Aorta (tissue), 5 donors: ENCODE measurements at regions of chr14 and their contacts with region 1.

Region 1: GRCh38 chr14:51651388-51652167 is at the start of gene FRMD6:
- DNase-seq: peak; percentile 93 to 96
- ATAC-seq: peak; percentile 94
- H3K4me3 ChIP-seq: peak within 1 kb of the TSS; percentile 60 to 73
- H3K27ac ChIP-seq: peak within 1 kb of the TSS; percentile 50 to 97
- H3K4me1 ChIP-seq: no peaks in the 10 kb centered on the region
- H3K27me3 ChIP-seq: no peaks in the 10 kb centered on the region
- total RNA-seq, gene FRMD6: 44.8 to 56.7 TPM

Region 2: GRCh38 chr14:51283402-51284085 is 368.0 kb before region 1 on chr14:
- intact Hi-C with region 1: loop called in 1 of 2 experiments (anchors 5 kb)
- DNase-seq: no peak
- ATAC-seq: peak; percentile 82
- H3K4me3 ChIP-seq: no peak overlapping the region
- H3K27ac ChIP-seq: no peak overlapping the region
- H3K4me1 ChIP-seq: no peaks in the 10 kb centered on the region
- H3K27me3 ChIP-seq: no peaks in the 10 kb centered on the region

Region 3: GRCh38 chr14:51448831-51449670 is 202.5 kb before region 1 on chr14:
- intact Hi-C with region 1: loop called in 1 of 2 experiments (anchors 5 kb)
- DNase-seq: peak in 1 of 2 donors; percentile 51
- ATAC-seq: peak; percentile 75
- H3K4me3 ChIP-seq: no peak overlapping the region
- H3K27ac ChIP-seq: no peak overlapping the region
- H3K4me1 ChIP-seq: no peaks in the 10 kb centered on the region
- H3K27me3 ChIP-seq: no peaks in the 10 kb centered on the region

Region 4: GRCh38 chr14:51547260-51547659 is 104.3 kb before region 1 on chr14:
- intact Hi-C with region 1: loop called in 1 of 2 experiments (anchors 2 kb)
- DNase-seq: peak in 1 of 2 donors; percentile 62
- ATAC-seq: peak; percentile 88
- H3K4me3 ChIP-seq: no peak overlapping the region
- H3K27ac ChIP-seq: peak overlapping the region in 1 of 2 donors; percentile 43
- H3K4me1 ChIP-seq: peaks cover 0 to 2% of the 10 kb centered on the region in 2 donors
- H3K27me3 ChIP-seq: no peaks in the 10 kb centered on the region

Region 5: DNA sequence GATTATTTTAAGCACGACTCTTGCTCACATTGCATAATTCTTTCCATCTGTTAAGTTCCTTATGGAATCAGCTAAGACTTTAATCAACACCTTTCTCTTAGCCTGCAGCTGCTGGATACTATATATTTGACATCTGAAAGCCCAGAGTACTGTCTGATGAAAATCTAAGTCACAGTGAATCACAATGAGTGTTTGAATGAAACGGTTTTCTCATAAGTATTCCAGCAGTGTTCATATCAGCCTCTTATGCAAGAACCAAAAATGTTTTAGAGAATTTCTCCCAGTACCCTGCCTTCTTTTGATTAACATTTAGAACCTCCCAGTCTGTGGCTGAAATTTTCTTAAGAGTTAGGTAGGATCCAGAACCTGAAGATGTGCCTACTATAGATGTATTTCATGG is 55.7 kb after region 1 on chr14:
- intact Hi-C with region 1: loop called in 1 of 2 experiments (anchors 5 kb)
- DNase-seq: no peak
- ATAC-seq: no peak
- H3K4me3 ChIP-seq: no peak overlapping the region
- H3K27ac ChIP-seq: no peak overlapping the region
- H3K4me1 ChIP-seq: peaks cover 0 to 2% of the 10 kb centered on the region in 2 donors
- H3K27me3 ChIP-seq: no peaks in the 10 kb centered on the region

Region 6: GRCh38 chr14:51780006-51780692 is 128.6 kb after region 1 on chr14:
- intact Hi-C with region 1: loop called (anchors 5 kb)
- DNase-seq: peak; percentile 72 to 87
- ATAC-seq: peak; percentile 84
- H3K4me3 ChIP-seq: no peak overlapping the region
- H3K27ac ChIP-seq: no peak overlapping the region
- H3K4me1 ChIP-seq: no peaks in the 10 kb centered on the region
- H3K27me3 ChIP-seq: no peaks in the 10 kb centered on the region